Transverse colon (tissue), 4 donors: ENCODE measurements at regions of chr16 and their contacts with region 1.

Region 1: DNA sequence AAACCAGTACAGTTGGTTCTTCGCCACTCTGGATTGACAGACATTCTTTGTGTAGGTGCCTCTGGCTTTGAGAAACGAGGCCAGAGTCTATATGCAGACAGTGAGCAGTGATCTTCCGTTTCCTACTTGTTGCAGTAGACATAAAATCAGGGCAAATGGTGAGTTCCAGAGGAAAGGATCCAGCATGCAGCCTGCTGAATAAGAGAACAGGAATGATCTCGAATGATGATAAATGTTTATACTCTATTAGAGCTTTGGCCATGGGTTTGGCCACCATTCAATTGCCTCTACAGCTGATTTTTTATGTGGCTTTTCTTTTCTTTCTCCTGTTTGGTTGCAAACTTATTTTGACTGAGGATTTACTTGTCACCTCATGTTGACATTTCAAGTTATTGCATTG is 286.7 kb downstream of the IRX3 start:
- DNase-seq: no peak
- H3K4me3 ChIP-seq: no peak overlapping the region
- H3K27ac ChIP-seq: no peak overlapping the region
- H3K4me1 ChIP-seq: peaks cover 0 to 6% (median 0%) of the 10 kb centered on the region in 4 donors
- H3K27me3 ChIP-seq: no peaks in the 10 kb centered on the region
- CTCF ChIP-seq: no peak
- EP300 ChIP-seq: no peak
- POLR2A ChIP-seq: no peak

Region 2: DNA sequence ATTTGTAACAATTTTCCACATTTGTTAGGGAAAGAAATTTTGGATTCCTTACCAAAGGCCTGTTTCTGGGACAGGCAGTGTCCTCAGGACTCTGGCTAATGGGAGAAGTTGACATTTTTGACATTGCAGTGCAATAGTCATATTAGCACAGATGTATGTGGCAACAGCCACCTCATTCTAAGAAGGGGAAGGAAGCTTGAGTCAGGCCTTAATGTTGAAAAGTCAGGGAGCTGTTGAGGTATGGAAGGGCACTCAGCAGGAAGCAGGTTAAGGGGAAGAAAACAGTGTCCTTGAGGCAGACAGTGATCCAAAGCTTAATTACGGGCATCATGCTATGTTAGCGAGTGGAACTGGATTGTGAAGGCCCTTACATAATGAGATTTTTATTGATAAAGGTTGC is 517.7 kb before region 1 on chr16:
- in situ Hi-C with region 1: no loop called
- intact Hi-C with region 1: no loop called
- DNase-seq: no peak
- H3K4me3 ChIP-seq: no peak overlapping the region
- H3K27ac ChIP-seq: no peak overlapping the region
- H3K4me1 ChIP-seq: no peaks in the 10 kb centered on the region
- H3K27me3 ChIP-seq: no peaks in the 10 kb centered on the region
- CTCF ChIP-seq: no peak
- EP300 ChIP-seq: no peak
- POLR2A ChIP-seq: no peak

Region 3: DNA sequence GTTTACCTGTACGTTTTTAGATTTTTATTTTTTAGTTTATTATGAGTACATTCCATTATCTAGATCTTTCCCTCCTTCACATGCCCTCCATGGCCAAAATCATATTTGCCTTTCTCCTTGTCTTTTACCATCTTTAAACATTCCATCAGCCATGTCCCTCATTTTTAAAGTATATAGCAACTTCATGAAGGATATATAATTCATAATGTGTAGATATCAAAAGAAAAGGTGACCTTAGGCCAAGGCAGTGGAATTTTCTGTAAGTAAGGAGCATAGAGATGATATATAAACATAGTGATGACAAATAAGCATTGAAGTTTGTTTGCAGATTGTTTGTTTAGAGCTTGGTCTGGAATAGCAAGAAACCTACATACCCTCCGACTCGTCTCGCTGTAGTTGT is 85.6 kb after region 1 on chr16:
- in situ Hi-C with region 1: no loop called
- intact Hi-C with region 1: no loop called
- DNase-seq: no peak
- H3K4me3 ChIP-seq: no peak overlapping the region
- H3K27ac ChIP-seq: no peak overlapping the region
- H3K4me1 ChIP-seq: no peaks in the 10 kb centered on the region
- H3K27me3 ChIP-seq: no peaks in the 10 kb centered on the region
- CTCF ChIP-seq: no peak
- EP300 ChIP-seq: no peak
- POLR2A ChIP-seq: no peak

Region 4: DNA sequence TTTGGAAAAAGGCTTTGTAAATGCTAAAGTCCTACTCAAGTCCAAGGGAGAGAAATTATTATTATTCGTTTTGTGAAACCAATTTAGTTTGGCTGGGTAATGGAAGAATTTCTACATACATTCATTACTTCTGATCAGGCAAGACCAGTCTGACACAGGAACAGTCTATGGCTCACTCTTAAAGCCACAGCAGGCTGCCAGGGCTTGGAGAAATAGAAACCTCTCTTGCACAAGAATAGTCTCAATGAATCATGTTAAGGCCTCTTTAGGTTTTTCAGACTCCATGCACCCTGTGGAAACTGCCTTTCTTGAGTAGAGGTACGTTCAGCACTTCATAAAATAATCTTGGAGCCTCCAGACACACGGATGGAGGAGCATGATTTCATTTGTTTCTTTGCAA is 119.0 kb after region 1 on chr16:
- in situ Hi-C with region 1: loop called in 1 of 4 experiments (anchors 25 kb)
- intact Hi-C with region 1: no loop called
- DNase-seq: no peak
- H3K4me3 ChIP-seq: no peak overlapping the region
- H3K27ac ChIP-seq: no peak overlapping the region
- H3K4me1 ChIP-seq: no peaks in the 10 kb centered on the region
- H3K27me3 ChIP-seq: no peaks in the 10 kb centered on the region
- CTCF ChIP-seq: no peak
- EP300 ChIP-seq: no peak
- POLR2A ChIP-seq: no peak